ENCODE measurements at regions of chr6 and their contacts with region 1.

Region 1: GRCh38 chr6:31158140-31158862 is at the start of gene TCF19:
- DNase-seq: peak; percentile 99
- H3K4me3 Mint-ChIP-seq: peak within 1 kb of the TSS; percentile 82
- H3K27ac Mint-ChIP-seq: peak within 1 kb of the TSS; percentile 75
- H3K4me1 Mint-ChIP-seq: peaks cover 29% of the 10 kb centered on the region
- H3K27me3 Mint-ChIP-seq: no peaks in the 10 kb centered on the region
- total RNA-seq, gene TCF19: 75.9 and 78.4 TPM in 2 replicates

Region 2: DNA sequence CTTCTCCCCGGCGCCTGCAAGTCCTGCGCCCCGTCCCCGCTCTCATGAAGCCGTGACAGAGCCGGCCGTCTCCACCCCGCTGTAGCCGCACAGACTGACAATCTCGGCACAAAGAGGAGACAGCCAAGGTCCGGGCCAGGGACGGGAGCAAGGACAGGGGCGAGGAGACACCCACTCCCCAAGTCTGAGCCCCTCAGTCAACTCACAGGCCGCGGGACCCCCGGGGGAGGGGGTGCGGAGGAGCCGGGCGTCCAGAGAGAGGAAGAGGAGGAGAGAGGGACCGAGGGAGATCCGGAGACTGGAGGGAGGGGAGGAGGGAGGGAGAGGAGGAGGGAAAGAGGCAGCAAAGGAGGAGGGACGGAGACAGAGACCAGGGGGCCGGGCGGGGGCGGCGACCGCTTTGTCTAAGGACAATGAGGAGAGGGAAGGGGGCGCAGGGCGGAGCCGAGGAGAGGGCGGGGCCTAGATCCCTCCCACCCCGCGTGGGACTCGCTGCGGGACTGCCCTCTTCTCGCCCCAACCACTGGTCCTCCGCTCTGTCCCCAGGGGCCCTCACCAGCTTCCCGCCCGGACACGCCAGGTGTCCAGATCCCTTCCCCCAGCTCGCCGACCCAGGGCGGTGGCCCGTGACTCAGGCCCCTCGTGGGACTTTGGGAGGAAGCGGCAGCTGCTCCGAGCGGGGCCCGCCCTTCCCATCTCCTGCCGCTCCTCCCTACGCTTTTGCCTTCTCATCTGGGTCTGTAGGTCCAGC is 471.2 kb before region 1 on chr6:
- intact Hi-C with region 1: loop called (anchors 1 kb)
- DNase-seq: peak; percentile 83
- H3K4me3 Mint-ChIP-seq: peak overlapping the region; percentile 94
- H3K27ac Mint-ChIP-seq: peak overlapping the region; percentile 87
- H3K4me1 Mint-ChIP-seq: peaks cover 50% of the 10 kb centered on the region
- H3K27me3 Mint-ChIP-seq: no peaks in the 10 kb centered on the region

Region 3: GRCh38 chr6:30914076-30914853 is 244.0 kb before region 1 on chr6 and contains the start of gene VARS2:
- intact Hi-C with region 1: loop called (anchors 1 kb)
- DNase-seq: peak; percentile 88
- H3K4me3 Mint-ChIP-seq: peak within 1 kb of the TSS; percentile 94
- H3K27ac Mint-ChIP-seq: peak within 1 kb of the TSS; percentile 97
- H3K4me1 Mint-ChIP-seq: peaks cover 40% of the 10 kb centered on the region
- H3K27me3 Mint-ChIP-seq: no peaks in the 10 kb centered on the region
- total RNA-seq, gene VARS2: 74.0 and 76.0 TPM in 2 replicates

Region 4: GRCh38 chr6:31016659-31017299 is 141.5 kb before region 1 on chr6:
- intact Hi-C with region 1: no loop called
- DNase-seq: no peak
- H3K4me3 Mint-ChIP-seq: no peak overlapping the region
- H3K27ac Mint-ChIP-seq: no peak overlapping the region
- H3K4me1 Mint-ChIP-seq: peaks cover 5% of the 10 kb centered on the region
- H3K27me3 Mint-ChIP-seq: peaks cover 12% of the 10 kb centered on the region

Region 5: DNA sequence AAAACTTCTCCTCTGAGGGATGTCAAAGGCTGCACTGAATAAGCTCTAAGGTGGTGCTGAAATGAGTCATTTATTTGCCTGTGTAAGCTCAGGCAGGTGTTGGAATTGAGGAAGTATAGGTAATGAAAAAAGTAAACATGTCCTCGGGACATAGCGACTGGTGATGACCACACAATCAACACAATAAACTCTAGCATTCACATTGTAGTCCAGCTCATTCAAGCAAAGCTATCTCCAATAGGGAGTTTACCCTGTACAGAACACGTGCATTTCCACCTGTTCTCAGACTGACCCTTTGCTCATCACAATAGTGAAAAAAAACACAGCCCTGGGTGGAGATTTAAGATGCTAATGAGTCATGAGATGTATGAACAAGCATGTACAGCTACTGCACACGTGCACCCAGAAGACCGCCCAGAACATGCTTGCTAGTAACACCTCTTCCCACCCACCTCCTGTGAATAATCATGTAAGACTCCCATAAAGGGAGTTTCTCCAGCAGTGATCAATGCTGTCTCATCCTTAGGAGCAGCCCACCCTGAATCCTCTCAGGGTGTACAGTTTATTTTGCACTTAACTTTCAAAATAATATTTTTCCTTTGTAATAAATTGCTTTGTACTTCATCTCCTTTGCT is 45.2 kb after region 1 on chr6:
- intact Hi-C with region 1: loop called (anchors 1 kb)
- DNase-seq: peak; percentile 54
- H3K4me3 Mint-ChIP-seq: peak overlapping the region; percentile 90
- H3K27ac Mint-ChIP-seq: peak overlapping the region; percentile 95
- H3K4me1 Mint-ChIP-seq: peaks cover 54% of the 10 kb centered on the region
- H3K27me3 Mint-ChIP-seq: no peaks in the 10 kb centered on the region

Region 6: DNA sequence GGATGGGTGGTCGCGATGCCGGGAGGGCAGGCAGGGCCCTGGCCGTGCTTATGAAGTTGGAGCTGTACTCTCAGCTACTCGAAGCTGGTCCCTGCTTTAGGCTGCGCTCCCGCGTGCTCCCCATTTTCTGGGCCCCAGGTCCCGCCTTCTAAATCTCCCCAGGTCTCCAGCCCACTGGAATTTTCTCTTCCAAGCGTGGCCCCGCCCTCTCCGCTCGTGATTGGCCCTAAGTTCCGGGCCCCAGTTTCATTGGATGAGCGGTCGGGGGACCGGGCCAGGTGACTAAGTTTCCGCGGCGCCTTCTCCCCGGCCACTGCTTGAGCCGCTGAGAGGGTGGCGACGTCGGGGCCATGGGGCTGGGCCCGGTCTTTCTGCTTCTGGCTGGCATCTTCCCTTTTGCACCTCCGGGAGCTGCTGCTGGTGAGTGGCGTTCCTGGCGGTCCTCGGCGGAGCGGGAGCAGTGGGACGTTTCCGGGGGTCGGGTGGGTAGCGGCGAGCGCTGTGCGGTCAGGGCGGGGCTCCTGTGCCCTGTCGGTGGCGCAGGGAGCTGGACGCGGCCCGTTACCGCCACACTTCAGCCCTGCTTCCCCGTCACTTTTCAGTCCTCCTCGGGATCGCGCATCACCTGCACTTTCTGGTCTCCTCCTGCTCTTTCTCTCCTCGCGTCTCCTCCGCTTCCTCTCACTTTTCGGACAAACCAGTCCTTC is 245.1 kb after region 1 on chr6 and contains the start of gene MICA:
- intact Hi-C with region 1: loop called (anchors 1 kb)
- DNase-seq: peak; percentile 66
- H3K4me3 Mint-ChIP-seq: peak within 1 kb of the TSS; percentile 84
- H3K27ac Mint-ChIP-seq: peak within 1 kb of the TSS; percentile 84
- H3K4me1 Mint-ChIP-seq: peaks cover 54% of the 10 kb centered on the region
- H3K27me3 Mint-ChIP-seq: peaks cover 2% of the 10 kb centered on the region
- total RNA-seq, gene MICA: 11.5 and 12.4 TPM in 2 replicates

Region 7: GRCh38 chr6:31652925-31653718 is 494.8 kb after region 1 on chr6:
- intact Hi-C with region 1: loop called (anchors 1 kb)
- DNase-seq: peak; percentile 81
- H3K4me3 Mint-ChIP-seq: peak overlapping the region; percentile 93
- H3K27ac Mint-ChIP-seq: peak overlapping the region; percentile 100
- H3K4me1 Mint-ChIP-seq: peaks cover 48% of the 10 kb centered on the region
- H3K27me3 Mint-ChIP-seq: no peaks in the 10 kb centered on the region

Measured in activated T-helper 1 cell treated with anti-CD3 and anti-CD28 coated beads, Interleukin-12 subunit alpha, Interleukin-12 subunit beta, Interleukin-2, Interleukin-4 antibody, amounts not matched to agents 30 ng/mL and 10 ng/mL and 1 ng/mL, durations not matched to agents 14 hours and 24 hours and 36 hours (primary cell).